Ovary (tissue), 10 donors: ENCODE measurements at regions of chr3 and their contacts with region 1.

Region 1: DNA sequence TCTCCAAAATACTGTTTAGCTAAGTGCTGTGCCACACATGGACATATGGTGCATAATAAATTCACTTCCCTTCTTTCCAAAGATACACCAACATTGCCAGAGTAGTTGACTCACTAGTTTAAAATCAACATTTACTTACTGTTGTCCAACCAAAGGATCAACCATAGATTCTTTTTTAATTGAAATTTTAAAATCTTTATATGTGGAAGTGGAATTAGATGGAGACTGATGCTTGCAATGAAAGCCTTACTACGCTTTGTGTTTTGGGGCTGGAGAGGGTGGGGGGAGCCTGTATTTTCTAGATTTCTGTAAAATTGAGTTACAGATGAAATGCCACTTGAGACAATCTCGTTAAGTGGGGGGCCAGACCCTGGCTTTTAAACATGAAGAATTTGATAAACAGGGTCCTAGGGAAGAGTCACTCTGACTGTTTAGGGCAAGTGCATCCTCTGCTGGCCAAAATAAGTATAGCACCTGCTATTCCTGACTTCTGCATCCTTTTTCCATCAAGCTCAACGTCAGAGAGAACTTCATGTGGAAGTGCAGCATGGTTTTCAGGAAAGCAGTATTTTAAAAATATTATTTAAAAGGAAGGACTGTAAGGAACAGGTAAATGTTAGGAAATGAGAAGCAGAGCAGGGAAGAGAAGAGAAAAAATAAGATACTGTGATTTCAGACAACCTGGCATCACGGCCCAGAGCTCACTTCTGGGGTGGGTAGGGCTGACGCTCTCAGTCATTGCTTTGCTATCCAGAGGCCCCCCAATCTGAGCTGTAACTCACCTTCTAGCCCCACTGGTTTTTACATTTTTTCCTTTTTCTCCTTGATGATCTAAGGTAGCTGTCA is 76.7 kb downstream of the BOC start:
- DNase-seq: peak in 4 of 5 donors; percentile 56 to 79 (median 66)
- H3K4me3 ChIP-seq: no peak overlapping the region
- H3K27ac ChIP-seq: peak overlapping the region in 1 of 2 donors; percentile 51
- H3K4me1 ChIP-seq: peaks cover 19% of the 10 kb centered on the region
- H3K27me3 ChIP-seq: no peaks in the 10 kb centered on the region
- CTCF ChIP-seq: peak; percentile 80 to 99 (median 98)
- EP300 ChIP-seq: no peak
- POLR2A ChIP-seq: no peak

Region 2: GRCh38 chr3:113051302-113051711 is 236.7 kb before region 1 on chr3:
- intact Hi-C with region 1: loop called (anchors 5 to 10 kb)
- DNase-seq: peak; percentile 78 to 92 (median 86)
- H3K4me3 ChIP-seq: peak overlapping the region; percentile 11
- H3K27ac ChIP-seq: peak overlapping the region in 1 of 2 donors; percentile 31
- H3K4me1 ChIP-seq: peaks cover 4% of the 10 kb centered on the region
- H3K27me3 ChIP-seq: no peaks in the 10 kb centered on the region
- CTCF ChIP-seq: peak; percentile 55 to 99 (median 96)
- EP300 ChIP-seq: no peak
- POLR2A ChIP-seq: no peak